ENCODE measurements at regions of chr14 and their contacts with region 1.

Region 1: DNA sequence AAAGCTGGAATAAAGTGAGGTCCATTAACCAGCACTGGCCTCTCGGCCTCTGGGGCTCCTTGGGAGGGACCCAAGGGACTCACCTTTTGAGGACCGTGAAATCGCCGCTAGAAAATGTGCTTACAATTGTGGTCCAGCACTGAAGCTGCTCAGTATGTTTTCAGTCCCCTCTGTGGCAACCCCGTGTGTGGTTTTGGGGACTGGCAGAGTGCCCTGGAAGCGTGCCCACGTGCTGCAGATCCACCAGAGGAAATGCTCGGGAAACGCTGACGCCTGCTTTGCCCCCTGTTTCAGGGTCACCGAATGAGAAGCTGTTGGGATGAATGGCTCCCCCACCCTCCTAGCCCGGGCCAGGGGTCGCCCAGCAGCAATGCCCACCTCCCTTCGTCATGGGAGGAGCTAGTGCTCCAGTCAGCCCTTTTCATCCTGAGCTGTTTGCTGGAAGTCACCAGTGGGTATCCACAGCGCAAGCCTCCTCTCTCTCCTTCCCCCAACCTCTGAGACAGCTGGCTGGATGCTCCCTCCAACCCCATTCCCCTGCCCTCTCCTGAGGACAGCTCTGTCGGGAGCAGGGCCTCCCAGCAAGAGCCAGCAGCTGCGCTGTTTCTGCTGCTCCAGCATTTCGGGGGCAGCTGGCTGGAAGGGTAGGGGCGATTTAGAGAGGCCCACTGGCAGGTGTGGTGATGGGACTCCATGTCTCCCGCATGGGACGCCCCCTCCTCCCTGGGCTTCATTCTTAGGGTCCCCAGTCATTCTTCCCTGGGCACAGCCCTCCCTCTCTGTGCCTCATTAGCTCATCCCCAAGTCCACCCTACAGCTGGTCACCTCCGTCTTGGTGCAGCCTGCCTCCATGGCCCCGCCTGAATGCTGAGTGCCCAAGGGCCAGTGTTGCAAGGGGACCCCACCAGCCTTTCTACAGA is 33.2 kb upstream of the PPP1R13B start:
- DNase-seq: no peak
- ATAC-seq: peak; percentile 54
- H3K4me3 ChIP-seq: peak overlapping the region; percentile 25 to 78 (median 48); a peak in 5 of 6 replicates
- H3K27ac ChIP-seq: peak overlapping the region; percentile 98
- H3K4me1 ChIP-seq: peaks cover 70% of the 10 kb centered on the region
- H3K27me3 ChIP-seq: no peaks in the 10 kb centered on the region; a peak in 1 of 5 replicates
- CTCF ChIP-seq: 0 out of 2 replicates have a peak, but pooled peaks have one; percentile 2
- EP300 ChIP-seq: no peak; a peak in 1 of 4 replicates
- POLR2A ChIP-seq: peak in 1 of 2 experiments; percentile 63; a peak in 2 of 4 replicates
- RAD21 ChIP-seq: no peak

Region 2: GRCh38 chr14:103847451-103848188 is 33.0 kb before region 1 on chr14 and contains the start of gene PPP1R13B:
- CTCF ChIA-PET with region 1: no interaction called
- POLR2A ChIA-PET with region 1: interaction called, 18 read pairs
- in situ Hi-C with region 1: no loop called
- intact Hi-C with region 1: loop called (anchors 5 kb)
- DNase-seq: peak; percentile 78
- ATAC-seq: peak; percentile 80
- H3K4me3 ChIP-seq: peak within 1 kb of the TSS; percentile 83 to 92 (median 88)
- H3K27ac ChIP-seq: peak within 1 kb of the TSS; percentile 63
- H3K4me1 ChIP-seq: peaks cover 44% of the 10 kb centered on the region
- H3K27me3 ChIP-seq: no peaks in the 10 kb centered on the region; a peak in 1 of 5 replicates
- CTCF ChIP-seq: no peak
- EP300 ChIP-seq: no peak
- POLR2A ChIP-seq: peak in 1 of 2 experiments; percentile 82; a peak in 2 of 4 replicates
- RAD21 ChIP-seq: peak; percentile 59
- total RNA-seq, gene PPP1R13B: 5.3 and 9.4 TPM in 2 replicates

Region 3: GRCh38 chr14:103855063-103855733 is 25.4 kb before region 1 on chr14:
- CTCF ChIA-PET with region 1: no interaction called
- POLR2A ChIA-PET with region 1: interaction called, 60 read pairs
- in situ Hi-C with region 1: no loop called
- intact Hi-C with region 1: no loop called
- DNase-seq: peak; percentile 55
- ATAC-seq: peak; percentile 86
- H3K4me3 ChIP-seq: peak overlapping the region; percentile 53 to 74 (median 59)
- H3K27ac ChIP-seq: peak overlapping the region; percentile 60
- H3K4me1 ChIP-seq: peaks cover 57% of the 10 kb centered on the region
- H3K27me3 ChIP-seq: 0 out of 5 replicates have a peak, but pooled peaks cover 0 to 4% of the 10 kb centered on the region in 2 experiments
- CTCF ChIP-seq: peak; percentile 66
- EP300 ChIP-seq: no peak
- POLR2A ChIP-seq: peak; percentile 34 to 49; a peak in 3 of 4 replicates
- RAD21 ChIP-seq: 0 out of 2 replicates have a peak, but pooled peaks have one; percentile 32

Region 4: DNA sequence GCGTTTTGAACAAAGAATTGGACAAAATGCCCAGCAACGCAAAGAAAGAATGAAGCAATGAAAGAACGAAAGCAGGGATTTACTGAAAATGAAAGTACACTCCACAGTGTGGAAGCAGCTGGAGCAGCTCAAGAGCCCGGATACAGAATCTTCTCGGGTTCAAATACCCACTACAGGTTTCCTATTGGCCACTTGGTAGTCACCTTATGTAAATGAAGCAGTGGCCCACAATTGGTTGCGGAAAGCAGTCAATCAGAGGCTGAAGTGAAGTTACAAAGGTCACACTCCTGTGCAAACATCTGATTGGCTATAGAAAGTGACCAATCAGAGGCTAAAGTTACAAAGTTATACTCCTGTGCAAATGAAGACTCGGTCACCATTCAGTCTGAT is 18.2 kb before region 1 on chr14:
- CTCF ChIA-PET with region 1: no interaction called
- POLR2A ChIA-PET with region 1: interaction called, 84 read pairs
- in situ Hi-C with region 1: no loop called
- intact Hi-C with region 1: no loop called
- DNase-seq: peak; percentile 95
- ATAC-seq: peak; percentile 89
- H3K4me3 ChIP-seq: peak overlapping the region; percentile 48 to 66 (median 49); a peak in 5 of 6 replicates
- H3K27ac ChIP-seq: peak overlapping the region; percentile 41
- H3K4me1 ChIP-seq: peaks cover 58% of the 10 kb centered on the region
- H3K27me3 ChIP-seq: 0 out of 5 replicates have a peak, but pooled peaks cover 0 to 4% of the 10 kb centered on the region in 2 experiments
- CTCF ChIP-seq: no peak
- EP300 ChIP-seq: no peak
- POLR2A ChIP-seq: peak in 1 of 2 experiments; percentile 72; a peak in 3 of 4 replicates
- RAD21 ChIP-seq: no peak

Region 5: DNA sequence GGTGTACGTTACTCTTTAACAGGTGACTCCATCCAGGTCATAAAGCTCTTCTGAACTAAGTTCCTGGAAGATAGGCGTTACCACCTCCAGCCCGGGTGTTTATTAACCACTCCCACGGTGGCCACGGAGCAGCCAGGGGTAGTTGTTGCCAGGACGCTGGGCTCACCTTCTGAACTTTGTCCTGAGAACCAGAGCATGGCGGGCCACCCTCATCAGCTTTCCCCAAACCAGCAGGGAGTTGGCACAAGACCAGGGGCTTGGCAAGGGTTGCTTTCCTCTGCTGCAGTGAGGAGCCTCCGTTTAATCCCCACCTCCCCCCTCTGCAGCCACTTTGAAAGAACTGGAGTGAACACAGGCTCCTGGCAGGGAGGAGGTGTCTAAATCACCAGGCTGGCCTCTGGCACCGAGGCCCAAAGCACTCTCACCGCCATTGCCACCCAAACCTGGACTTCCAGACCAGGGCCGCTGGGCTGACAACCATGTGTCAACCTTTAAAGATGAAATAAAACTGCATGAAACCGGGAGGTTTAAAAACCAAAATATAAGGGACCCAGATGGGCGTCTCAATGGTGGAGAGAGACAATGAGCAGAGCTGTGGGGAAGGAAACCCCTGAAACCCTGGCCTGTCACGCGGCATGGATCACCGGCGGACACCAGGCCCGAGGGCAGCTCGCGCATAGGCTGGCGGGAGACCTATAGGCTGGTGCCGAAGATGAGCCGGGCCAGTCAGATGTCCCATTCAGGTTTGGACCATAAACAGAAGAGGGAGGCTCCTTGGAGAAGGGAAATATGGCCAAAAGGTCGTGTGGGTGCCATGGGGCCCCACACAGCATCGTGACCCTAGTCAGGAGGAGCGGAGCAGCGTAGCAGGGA is 16.7 kb after region 1 on chr14:
- CTCF ChIA-PET with region 1: interaction called, 5 read pairs
- POLR2A ChIA-PET with region 1: interaction called, 195 read pairs
- in situ Hi-C with region 1: no loop called
- intact Hi-C with region 1: no loop called
- DNase-seq: peak; percentile 28
- ATAC-seq: peak; percentile 39
- H3K4me3 ChIP-seq: peak overlapping the region in 1 of 3 experiments; percentile 14; a peak in 1 of 6 replicates
- H3K27ac ChIP-seq: peak overlapping the region; percentile 27
- H3K4me1 ChIP-seq: peaks cover 66% of the 10 kb centered on the region
- H3K27me3 ChIP-seq: no peaks in the 10 kb centered on the region; a peak in 1 of 5 replicates
- CTCF ChIP-seq: no peak
- EP300 ChIP-seq: no peak
- POLR2A ChIP-seq: 0 out of 4 replicates have a peak, but pooled peaks of 1 of the 2 experiments have one; percentile 32
- RAD21 ChIP-seq: no peak

Measured in HepG2 (cell line).